ENCODE measurements at regions of chr10 and their contacts with region 1.

Region 1: GRCh38 chr10:70146489-70147258 is at the start of gene TYSND1:
- DNase-seq: peak; percentile 97
- H3K4me3 Mint-ChIP-seq: peak within 1 kb of the TSS; percentile 80
- H3K27ac Mint-ChIP-seq: peak within 1 kb of the TSS; percentile 93
- H3K4me1 Mint-ChIP-seq: peaks cover 25% of the 10 kb centered on the region
- H3K27me3 Mint-ChIP-seq: no peaks in the 10 kb centered on the region

Region 2: DNA sequence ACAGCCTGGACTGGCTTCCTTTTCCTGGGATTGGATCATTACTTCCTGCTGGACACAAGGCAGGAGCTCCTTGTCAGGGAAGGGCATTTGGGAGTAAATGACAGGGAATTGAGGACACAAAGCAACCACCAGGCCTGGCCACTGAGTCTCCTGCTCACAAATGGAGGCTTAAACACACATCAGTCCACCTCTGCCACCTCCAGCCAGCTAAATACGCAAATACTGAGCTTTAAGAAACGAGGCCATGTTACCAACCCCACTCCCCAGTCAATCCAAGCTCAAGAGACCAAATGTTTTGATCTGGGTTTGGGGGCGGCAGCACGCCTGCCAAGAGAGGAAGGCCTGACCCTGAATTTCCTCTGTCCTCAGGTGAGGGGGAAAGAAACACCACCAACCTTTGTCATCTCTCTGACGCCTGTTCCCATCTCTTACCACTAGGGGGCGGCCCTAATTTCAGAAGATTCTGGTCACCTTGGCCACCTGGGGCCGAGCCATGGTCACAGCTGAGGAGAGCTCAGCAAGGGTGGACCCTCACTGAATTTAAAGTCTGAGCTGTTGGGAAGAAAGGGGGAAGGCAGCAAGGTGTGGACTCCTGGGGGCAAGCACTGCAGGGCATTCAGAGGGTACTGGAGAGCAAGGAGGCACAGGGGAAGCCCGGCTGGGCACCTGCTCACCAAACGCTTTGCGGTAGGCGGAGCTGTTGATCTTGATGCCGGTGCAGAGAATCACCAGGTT is 30.6 kb before region 1 on chr10:
- CTCF ChIA-PET with region 1: interaction called, 51 read pairs
- DNase-seq: peak; percentile 68
- H3K4me3 Mint-ChIP-seq: no peak overlapping the region
- H3K27ac Mint-ChIP-seq: no peak overlapping the region
- H3K4me1 Mint-ChIP-seq: peaks cover 10% of the 10 kb centered on the region
- H3K27me3 Mint-ChIP-seq: peaks cover 3% of the 10 kb centered on the region

Region 3: DNA sequence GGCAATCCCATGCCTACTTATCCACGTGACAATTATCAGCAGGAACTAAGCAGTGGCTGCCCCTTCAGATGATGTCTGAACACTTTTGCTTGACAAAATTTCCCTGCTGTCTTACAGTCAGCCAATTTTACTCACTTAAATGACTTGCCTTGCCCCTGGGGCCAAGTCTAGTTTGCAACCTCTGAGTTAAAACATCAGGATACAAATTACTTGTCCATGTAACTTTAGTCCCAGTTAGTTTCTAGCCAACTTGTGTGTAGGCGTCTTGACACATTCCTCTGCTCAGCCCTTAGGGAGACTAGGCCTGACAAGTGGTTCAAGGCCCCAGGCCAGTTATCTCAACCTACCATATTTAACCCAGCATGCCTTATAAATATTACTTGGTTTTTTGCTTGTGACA is 11.4 kb after region 1 on chr10:
- CTCF ChIA-PET with region 1: interaction called, 18 read pairs
- DNase-seq: no peak
- H3K4me3 Mint-ChIP-seq: no peak overlapping the region
- H3K27ac Mint-ChIP-seq: no peak overlapping the region
- H3K4me1 Mint-ChIP-seq: peaks cover 26% of the 10 kb centered on the region
- H3K27me3 Mint-ChIP-seq: no peaks in the 10 kb centered on the region

Region 4: GRCh38 chr10:70198696-70199466 is 52.2 kb after region 1 on chr10:
- CTCF ChIA-PET with region 1: interaction called, 12 read pairs
- DNase-seq: peak; percentile 32
- H3K4me3 Mint-ChIP-seq: no peak overlapping the region
- H3K27ac Mint-ChIP-seq: no peak overlapping the region
- H3K4me1 Mint-ChIP-seq: peaks cover 23% of the 10 kb centered on the region
- H3K27me3 Mint-ChIP-seq: no peaks in the 10 kb centered on the region

Region 5: GRCh38 chr10:70227548-70228320 is 81.1 kb after region 1 on chr10:
- CTCF ChIA-PET with region 1: interaction called, 12 read pairs
- DNase-seq: no peak
- H3K4me3 Mint-ChIP-seq: no peak overlapping the region
- H3K27ac Mint-ChIP-seq: no peak overlapping the region
- H3K4me1 Mint-ChIP-seq: peaks cover 45% of the 10 kb centered on the region
- H3K27me3 Mint-ChIP-seq: no peaks in the 10 kb centered on the region